ENCODE measurements at regions of chr4 and their contacts with region 1.

Region 1: DNA sequence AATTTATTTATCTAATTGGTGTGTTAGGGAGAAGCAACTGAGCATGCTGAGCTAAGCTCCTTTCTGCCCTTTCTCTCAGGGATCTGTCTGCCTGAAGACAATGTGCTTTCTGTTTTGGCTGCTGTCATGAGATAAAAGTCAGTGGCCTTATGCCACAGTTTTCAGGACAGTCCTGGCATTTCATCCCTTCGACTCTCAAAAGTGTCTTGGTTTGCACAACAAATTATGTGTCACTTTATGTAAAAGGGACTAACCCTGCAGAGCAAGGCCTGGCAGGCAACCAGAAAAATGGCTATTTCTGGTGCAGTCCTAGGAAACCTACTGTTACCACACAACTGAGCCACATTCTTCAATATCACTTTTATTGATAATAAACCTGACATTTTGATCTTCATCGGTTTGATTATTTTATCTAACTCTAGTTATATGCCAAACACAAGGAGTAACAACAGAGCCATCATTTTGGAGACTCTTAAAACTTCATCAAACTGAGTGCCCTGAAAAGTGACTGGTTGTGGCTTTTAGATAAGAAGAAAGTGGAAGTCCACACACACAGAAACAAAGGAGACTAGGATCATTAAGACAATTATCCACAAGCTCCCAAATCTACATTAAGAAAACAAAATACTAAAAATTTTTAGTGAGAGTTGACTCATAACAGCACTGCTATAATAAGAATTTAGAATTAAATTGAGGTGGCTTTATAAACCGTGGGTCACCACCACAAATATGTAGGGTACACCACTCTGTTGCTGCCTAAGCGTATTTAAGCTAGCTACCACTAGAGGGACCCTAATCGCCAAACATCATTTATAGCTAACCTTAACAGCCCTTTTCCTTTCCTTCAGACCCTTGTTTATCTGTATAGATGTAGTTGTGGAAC is 95.9 kb upstream of the PTPN13 start:
- DNase-seq: no peak
- H3K4me3 Mint-ChIP-seq: no peak overlapping the region
- H3K27ac Mint-ChIP-seq: no peak overlapping the region
- H3K4me1 Mint-ChIP-seq: no peaks in the 10 kb centered on the region
- H3K27me3 Mint-ChIP-seq: peaks cover 6% of the 10 kb centered on the region

Region 2: DNA sequence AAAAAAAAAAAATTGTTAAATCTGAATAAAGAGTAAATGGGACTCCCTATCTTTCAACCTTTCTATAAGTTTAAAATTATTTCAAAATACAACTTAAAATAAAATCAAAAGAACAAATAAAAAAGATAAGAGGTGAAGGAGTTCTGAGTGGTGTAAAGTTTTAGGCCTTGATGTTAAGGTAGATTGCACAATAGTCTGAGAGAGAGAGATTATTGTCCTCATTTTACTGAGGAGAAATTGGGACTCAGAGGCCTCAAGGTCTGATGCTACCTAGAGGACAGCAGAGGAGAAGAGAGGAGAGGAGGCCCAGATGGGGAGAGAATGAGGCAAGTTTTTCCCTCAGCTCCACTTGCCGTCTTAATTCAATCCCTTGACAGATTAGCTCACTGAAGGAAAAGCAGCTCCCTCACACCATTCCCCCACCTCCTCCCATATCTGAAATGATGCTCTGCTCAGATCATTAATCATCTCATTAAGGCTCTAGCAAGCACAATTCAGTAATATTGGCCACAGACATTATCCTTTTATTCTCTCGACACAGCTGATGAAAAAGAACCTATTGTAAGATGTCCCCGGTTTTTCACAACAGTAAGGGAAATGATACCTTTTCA is 10.4 kb before region 1 on chr4:
- CTCF ChIA-PET with region 1: interaction called, 36 read pairs
- intact Hi-C with region 1: no loop called
- DNase-seq: no peak
- H3K4me3 Mint-ChIP-seq: no peak overlapping the region
- H3K27ac Mint-ChIP-seq: no peak overlapping the region
- H3K4me1 Mint-ChIP-seq: peaks cover 3% of the 10 kb centered on the region
- H3K27me3 Mint-ChIP-seq: no peaks in the 10 kb centered on the region

Region 3: DNA sequence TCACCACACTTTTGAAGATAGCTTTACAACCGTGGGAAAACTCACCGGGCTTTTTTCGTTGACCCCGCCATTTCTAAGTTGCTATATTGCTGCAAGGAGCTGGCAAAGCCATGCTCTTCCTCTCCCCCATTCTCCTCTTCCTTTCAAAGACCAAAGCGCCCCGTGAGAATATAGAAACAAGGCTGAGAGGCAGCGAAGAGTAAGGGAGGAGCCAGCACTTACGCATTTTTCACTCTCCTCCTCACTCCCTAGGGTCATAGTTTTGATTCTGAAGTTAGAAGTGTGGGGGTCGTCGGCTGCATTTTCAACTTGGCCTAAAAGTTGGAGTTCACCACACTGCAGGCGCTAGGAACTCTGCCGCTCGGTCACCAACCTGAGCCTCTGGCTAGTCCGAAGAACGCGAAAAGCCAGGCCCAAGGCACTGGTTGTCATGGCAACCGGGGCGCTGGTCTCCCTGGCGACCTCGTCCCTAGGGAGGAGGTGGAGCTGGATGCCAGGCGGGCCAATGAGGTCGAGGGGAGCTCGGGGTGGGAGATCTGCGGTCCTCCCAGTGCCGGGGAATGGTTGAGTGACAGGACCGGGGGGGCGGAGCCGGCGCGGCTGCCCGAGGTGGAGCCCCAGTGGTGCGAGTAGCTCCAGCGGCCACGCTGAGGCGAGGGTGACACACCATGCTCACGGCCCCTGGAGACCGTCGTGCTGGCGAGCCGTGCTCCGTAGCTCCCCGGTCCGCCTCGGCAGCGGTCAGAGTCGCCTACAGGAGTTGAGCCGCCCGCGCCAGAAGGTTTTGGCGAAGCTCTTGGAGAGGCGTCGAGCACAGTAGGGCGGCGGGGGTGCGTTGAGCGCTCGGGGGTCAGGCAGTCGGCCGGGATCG is 95.7 kb after region 1 on chr4 and contains the start of gene PTPN13:
- CTCF ChIA-PET with region 1: interaction called, 6 read pairs
- intact Hi-C with region 1: loop called (anchors 5 kb)
- DNase-seq: peak; percentile 55
- H3K4me3 Mint-ChIP-seq: peak within 1 kb of the TSS; percentile 69
- H3K27ac Mint-ChIP-seq: no peak within 1 kb of the TSS
- H3K4me1 Mint-ChIP-seq: peaks cover 14% of the 10 kb centered on the region
- H3K27me3 Mint-ChIP-seq: peaks cover 48% of the 10 kb centered on the region
- total RNA-seq, gene PTPN13: 0.17 TPM in 1 of 2 experiments, not detected in the other

Region 4: DNA sequence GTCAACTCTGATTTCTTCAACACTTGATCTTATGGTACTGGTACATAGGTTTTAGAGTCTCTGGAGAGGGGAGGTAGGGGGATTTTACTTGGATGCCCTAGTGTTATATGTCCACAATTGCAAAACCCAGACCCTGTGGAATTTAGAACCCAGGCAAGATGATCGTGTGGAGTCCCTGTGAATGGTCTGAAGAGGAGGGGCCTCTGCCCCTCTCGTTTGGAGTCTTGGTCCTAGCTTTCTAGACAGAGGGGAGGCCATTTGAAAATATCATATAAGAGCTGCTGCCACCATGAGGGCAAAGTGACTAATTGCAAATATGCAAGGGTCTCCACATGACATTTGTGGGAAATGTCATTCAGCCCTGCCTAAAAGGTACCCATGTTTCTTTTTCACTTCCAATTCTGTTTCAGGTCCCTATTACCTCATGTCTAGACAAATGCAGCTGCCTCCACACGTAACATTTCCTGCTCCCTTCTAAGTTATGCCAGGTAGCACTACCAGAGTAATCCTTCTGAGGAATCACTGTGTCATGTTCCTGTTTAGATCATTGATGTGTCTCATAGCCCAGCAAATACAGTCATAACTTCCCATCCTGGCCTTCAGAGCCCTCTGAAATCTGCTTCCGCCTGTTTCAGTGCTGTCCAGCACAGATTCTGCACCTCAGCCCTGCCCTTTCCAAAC is 595.4 kb after region 1 on chr4:
- CTCF ChIA-PET with region 1: interaction called, 3 read pairs
- intact Hi-C with region 1: loop called (anchors 5 kb)
- DNase-seq: peak; percentile 66
- H3K4me3 Mint-ChIP-seq: no peak overlapping the region
- H3K27ac Mint-ChIP-seq: peak overlapping the region; percentile 53
- H3K4me1 Mint-ChIP-seq: peaks cover 44% of the 10 kb centered on the region
- H3K27me3 Mint-ChIP-seq: no peaks in the 10 kb centered on the region

Region 5: GRCh38 chr4:87465739-87466366 is 967.6 kb after region 1 on chr4:
- CTCF ChIA-PET with region 1: interaction called, 4 read pairs
- intact Hi-C with region 1: loop called (anchors 5 kb)
- DNase-seq: no peak
- H3K4me3 Mint-ChIP-seq: no peak overlapping the region
- H3K27ac Mint-ChIP-seq: no peak overlapping the region
- H3K4me1 Mint-ChIP-seq: no peaks in the 10 kb centered on the region
- H3K27me3 Mint-ChIP-seq: no peaks in the 10 kb centered on the region

Measured in activated naive CD4-positive, alpha-beta T cell treated with anti-CD3 and anti-CD28 coated beads for 36 hours (primary cell).